Activated CD4-positive, alpha-beta memory T cell treated with anti-CD3 and anti-CD28 coated beads for 36 hours (primary cell): ENCODE measurements at regions of chrX and their contacts with region 1.

Region 1: GRCh38 chrX:74133156-74133796 is 170.7 kb upstream of the ZCCHC13 start:
- DNase-seq: no peak
- H3K4me3 Mint-ChIP-seq: no peak overlapping the region
- H3K27ac Mint-ChIP-seq: no peak overlapping the region
- H3K4me1 Mint-ChIP-seq: no peaks in the 10 kb centered on the region
- H3K27me3 Mint-ChIP-seq: no peaks in the 10 kb centered on the region

Region 2: DNA sequence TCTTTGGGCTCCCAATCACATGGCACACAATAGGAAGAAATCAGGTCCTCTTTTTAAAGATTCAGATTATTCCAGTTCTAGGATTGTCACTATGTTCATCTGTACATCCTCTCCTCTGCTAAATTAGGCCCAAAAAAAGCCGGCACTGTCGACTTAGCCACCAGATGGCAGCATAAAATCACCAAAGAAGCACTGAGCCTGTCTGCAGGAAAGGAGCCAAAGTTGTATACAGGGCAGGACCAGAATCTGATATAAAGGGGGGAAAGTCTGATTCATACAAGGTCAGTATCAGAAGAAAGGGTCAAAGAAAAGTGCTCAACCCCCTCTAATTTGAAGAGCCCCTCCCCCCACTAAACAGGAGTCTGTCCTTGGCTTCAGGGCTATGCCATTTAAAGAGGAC is 277.7 kb before region 1 on chrX:
- CTCF ChIA-PET with region 1: interaction called, 4 read pairs
- POLR2A ChIA-PET with region 1: no interaction called
- intact Hi-C with region 1: loop called (anchors 1 kb)
- DNase-seq: peak; percentile 66
- H3K4me3 Mint-ChIP-seq: no peak overlapping the region
- H3K27ac Mint-ChIP-seq: no peak overlapping the region
- H3K4me1 Mint-ChIP-seq: no peaks in the 10 kb centered on the region
- H3K27me3 Mint-ChIP-seq: no peaks in the 10 kb centered on the region

Region 3: GRCh38 chrX:74015379-74016019 is 117.8 kb before region 1 on chrX:
- CTCF ChIA-PET with region 1: interaction called, 3 read pairs
- POLR2A ChIA-PET with region 1: no interaction called
- intact Hi-C with region 1: loop called (anchors 2 kb)
- DNase-seq: peak; percentile 60
- H3K4me3 Mint-ChIP-seq: no peak overlapping the region
- H3K27ac Mint-ChIP-seq: no peak overlapping the region
- H3K4me1 Mint-ChIP-seq: no peaks in the 10 kb centered on the region
- H3K27me3 Mint-ChIP-seq: no peaks in the 10 kb centered on the region

Region 4: DNA sequence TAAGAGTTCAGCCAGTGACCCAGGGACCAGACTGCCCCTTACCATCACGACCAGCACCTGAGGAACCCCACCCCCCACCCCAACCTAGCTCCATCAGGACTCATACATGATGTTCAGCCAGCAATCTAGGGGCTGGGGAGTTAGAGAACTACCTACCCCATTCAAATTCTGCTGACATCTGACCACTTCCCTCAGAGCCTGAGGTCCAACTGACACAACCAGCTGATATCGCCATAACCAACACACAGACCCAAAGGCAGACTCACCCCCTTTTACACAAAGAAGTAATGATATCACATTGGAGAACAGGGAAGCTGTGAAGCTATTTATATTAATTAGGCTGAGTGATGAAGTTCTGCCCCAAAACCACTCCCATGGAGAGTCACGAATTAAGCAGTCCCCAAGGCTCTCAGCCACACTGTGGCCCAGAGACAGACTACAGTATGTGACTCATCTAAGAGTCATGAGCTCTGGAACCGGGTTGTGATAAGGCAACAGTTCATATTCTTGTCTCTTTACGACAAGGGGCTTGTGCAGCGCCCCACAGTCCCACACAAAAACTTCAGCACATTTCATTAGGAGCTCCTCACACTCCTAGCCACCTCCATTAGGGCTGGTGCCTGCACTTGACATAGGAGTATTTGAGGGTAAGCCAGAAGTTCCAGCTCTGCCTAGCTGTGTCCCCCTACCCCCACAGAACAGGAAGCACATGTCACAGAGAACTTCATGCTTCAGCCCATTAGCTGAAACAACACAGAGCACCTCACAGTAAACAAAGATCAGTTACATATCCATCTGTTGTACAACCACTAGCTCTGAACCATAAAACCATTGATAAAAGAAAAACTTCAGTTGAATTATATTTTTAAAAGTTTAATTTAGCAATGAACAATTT is 14.0 kb before region 1 on chrX:
- CTCF ChIA-PET with region 1: no interaction called
- POLR2A ChIA-PET with region 1: no interaction called
- intact Hi-C with region 1: no loop called
- DNase-seq: no peak
- H3K4me3 Mint-ChIP-seq: no peak overlapping the region
- H3K27ac Mint-ChIP-seq: no peak overlapping the region
- H3K4me1 Mint-ChIP-seq: no peaks in the 10 kb centered on the region
- H3K27me3 Mint-ChIP-seq: no peaks in the 10 kb centered on the region